ENCODE measurements at regions of chr17 and their contacts with region 1.

Region 1: GRCh38 chr17:57955183-57955931 is at the start of gene CUEDC1:
- DNase-seq: peak in 1 of 2 experiments; percentile 82
- H3K4me3 ChIP-seq: peak within 1 kb of the TSS; percentile 32 to 86 (median 66)
- H3K27ac ChIP-seq: no peak within 1 kb of the TSS
- H3K4me1 ChIP-seq: peaks cover 12 to 23% (median 14%) of the 10 kb centered on the region in 4 experiments
- H3K27me3 ChIP-seq: peaks cover 0 to 30% (median 20%) of the 10 kb centered on the region in 4 experiments; a peak in 6 of 7 replicates
- CTCF ChIP-seq: peak; percentile 16 to 63 (median 37)
- EP300 ChIP-seq: no peak
- POLR2A ChIP-seq: no peak
- RAD21 ChIP-seq: peak in 1 of 2 experiments; percentile 23; a peak in 2 of 4 replicates
- total RNA-seq, gene CUEDC1: 7.8 and 10.7 TPM in 2 replicates

Region 2: DNA sequence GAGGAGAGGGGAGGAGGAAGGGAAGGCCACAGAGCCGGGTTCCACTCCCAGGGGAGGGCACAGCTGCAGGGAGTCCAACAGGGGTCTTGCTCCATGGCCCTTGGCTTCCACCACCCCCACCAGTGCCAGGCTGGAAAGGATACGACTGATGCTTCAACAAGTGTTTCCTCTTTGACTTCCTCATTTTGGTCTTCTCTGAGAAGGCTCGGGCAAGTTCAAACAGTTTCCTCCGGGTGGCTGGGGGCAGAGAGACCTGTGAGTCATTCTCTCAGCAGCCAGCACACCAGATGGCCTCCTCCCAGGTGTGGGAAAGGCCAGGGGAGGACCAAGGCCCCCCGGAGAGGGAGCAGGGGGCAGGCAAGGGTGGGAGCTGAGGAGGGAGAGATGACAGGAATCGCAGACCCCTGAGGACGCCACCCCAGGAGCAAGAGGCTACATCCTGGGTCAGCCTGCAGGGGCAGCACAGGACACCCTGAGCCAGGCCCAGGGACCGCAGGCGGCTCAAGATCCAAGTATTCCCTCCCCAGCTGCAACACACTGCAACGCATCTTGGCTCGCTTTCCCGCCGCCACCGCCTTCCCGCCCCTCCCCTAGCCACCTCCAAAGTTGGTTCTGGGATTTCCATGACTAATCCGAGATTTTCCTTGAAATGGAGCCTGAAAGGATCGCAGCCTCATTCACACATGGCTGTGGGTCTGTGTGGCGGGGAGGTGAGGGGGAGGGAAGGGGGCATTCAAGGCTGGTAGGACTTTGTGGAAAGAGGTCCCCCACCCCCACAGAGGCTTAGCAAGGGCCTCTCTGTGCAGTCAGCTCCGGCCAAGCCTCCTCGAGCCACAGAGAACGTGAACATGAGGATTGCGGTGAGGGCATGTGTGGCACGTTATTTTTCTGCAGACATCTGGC is 87.1 kb before region 1 on chr17:
- CTCF ChIA-PET with region 1: interaction called, 162 read pairs
- POLR2A ChIA-PET with region 1: interaction called, 15 read pairs
- DNase-seq: peak; percentile 58 to 71
- H3K4me3 ChIP-seq: no peak overlapping the region
- H3K27ac ChIP-seq: no peak overlapping the region
- H3K4me1 ChIP-seq: peaks cover 0 to 17% (median 10%) of the 10 kb centered on the region in 4 experiments; a peak in 6 of 7 replicates
- H3K27me3 ChIP-seq: no peaks in the 10 kb centered on the region; a peak in 2 of 7 replicates
- CTCF ChIP-seq: peak; percentile 65 to 79 (median 73)
- EP300 ChIP-seq: no peak
- POLR2A ChIP-seq: no peak
- RAD21 ChIP-seq: peak; percentile 65 to 68

Region 3: GRCh38 chr17:57892146-57892828 is 63.1 kb before region 1 on chr17:
- CTCF ChIA-PET with region 1: interaction called, 14 read pairs
- POLR2A ChIA-PET with region 1: interaction called, 4 read pairs
- DNase-seq: peak in 1 of 2 experiments; percentile 99
- H3K4me3 ChIP-seq: peak overlapping the region in 1 of 4 experiments; percentile 1; a peak in 1 of 8 replicates
- H3K27ac ChIP-seq: peak overlapping the region; percentile 54; the same call in 1 of the 2 replicates
- H3K4me1 ChIP-seq: peaks cover 8 to 11% (median 11%) of the 10 kb centered on the region in 4 experiments
- H3K27me3 ChIP-seq: no peaks in the 10 kb centered on the region
- CTCF ChIP-seq: peak; percentile 96 to 100 (median 100)
- EP300 ChIP-seq: peak in 1 of 2 experiments; percentile 71; a peak in 1 of 3 replicates
- POLR2A ChIP-seq: no peak
- RAD21 ChIP-seq: peak; percentile 89 to 94

Region 4: GRCh38 chr17:57916925-57917858 is 38.2 kb before region 1 on chr17:
- CTCF ChIA-PET with region 1: interaction called, 12 read pairs
- POLR2A ChIA-PET with region 1: no interaction called
- DNase-seq: no peak
- H3K4me3 ChIP-seq: no peak overlapping the region
- H3K27ac ChIP-seq: peak overlapping the region; percentile 68; the same call in 1 of the 2 replicates
- H3K4me1 ChIP-seq: peaks cover 5 to 21% (median 14%) of the 10 kb centered on the region in 4 experiments; a peak in 5 of 7 replicates
- H3K27me3 ChIP-seq: no peaks in the 10 kb centered on the region
- CTCF ChIP-seq: peak in 1 of 3 experiments; percentile 2; a peak in 1 of 4 replicates
- EP300 ChIP-seq: no peak
- POLR2A ChIP-seq: no peak
- RAD21 ChIP-seq: peak in 1 of 2 experiments; percentile 20; a peak in 1 of 4 replicates

Region 5: DNA sequence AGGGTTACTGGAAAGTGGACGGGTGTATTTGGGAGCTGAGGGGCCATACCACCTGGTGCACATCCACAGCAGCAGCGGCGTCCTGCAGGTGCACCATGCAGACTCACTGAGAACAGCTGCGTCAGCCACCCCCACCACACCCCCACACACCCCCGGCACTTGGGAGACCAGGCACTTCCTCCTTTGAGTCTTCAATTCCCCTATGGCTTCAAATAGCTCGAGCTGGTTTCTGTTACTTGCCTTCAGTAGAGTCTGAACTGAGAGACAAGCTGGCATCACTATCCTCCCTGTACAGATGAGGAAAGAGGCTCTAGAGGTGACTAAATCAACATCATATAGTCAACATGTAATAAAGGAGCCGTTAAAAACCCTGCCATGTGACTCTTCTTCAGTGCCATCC is 15.6 kb before region 1 on chr17:
- CTCF ChIA-PET with region 1: interaction called, 65 read pairs
- POLR2A ChIA-PET with region 1: interaction called, 7 read pairs
- DNase-seq: no peak
- H3K4me3 ChIP-seq: no peak overlapping the region
- H3K27ac ChIP-seq: no peak overlapping the region
- H3K4me1 ChIP-seq: peaks cover 6 to 15% (median 13%) of the 10 kb centered on the region in 4 experiments
- H3K27me3 ChIP-seq: no peaks in the 10 kb centered on the region
- CTCF ChIP-seq: no peak
- EP300 ChIP-seq: no peak
- POLR2A ChIP-seq: no peak
- RAD21 ChIP-seq: no peak

Region 6: DNA sequence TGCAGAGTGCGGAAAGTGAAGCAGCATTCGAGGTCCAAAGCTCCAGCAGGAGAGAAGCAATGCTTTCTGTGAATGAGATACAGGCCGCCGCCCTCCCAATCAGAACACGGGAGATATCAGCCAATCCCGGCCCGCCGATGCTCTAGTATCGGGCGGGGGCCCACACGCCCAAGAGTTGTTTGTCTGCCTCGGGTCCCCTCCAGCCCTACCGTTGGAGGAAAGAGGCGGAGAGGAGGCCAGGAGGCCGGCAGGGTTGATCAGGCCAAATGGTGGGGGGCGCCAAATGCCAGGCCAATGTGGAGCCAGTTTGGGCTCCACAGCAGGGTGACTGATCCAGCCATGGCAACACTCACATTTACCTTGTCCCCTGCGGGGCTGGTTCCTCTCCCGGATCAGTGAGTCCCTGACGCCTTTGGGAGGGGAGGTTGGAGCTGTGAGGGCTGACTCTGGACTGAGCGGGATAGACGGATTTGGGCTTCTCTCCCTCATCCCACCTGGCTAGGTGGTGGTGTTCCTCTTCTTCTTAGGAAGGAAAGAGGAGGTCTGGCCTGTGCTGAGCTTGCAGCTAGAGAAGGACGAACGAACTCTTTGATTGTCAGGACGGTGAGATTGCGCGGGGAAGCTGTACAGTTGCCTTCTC is 10.3 kb after region 1 on chr17:
- CTCF ChIA-PET with region 1: interaction called, 56 read pairs
- POLR2A ChIA-PET with region 1: interaction called, 12 read pairs
- DNase-seq: peak in 1 of 2 experiments; percentile 52
- H3K4me3 ChIP-seq: no peak overlapping the region
- H3K27ac ChIP-seq: no peak overlapping the region
- H3K4me1 ChIP-seq: peaks cover 0 to 6% (median 0%) of the 10 kb centered on the region in 4 experiments; a peak in 3 of 7 replicates
- H3K27me3 ChIP-seq: no peaks in the 10 kb centered on the region
- CTCF ChIP-seq: no peak
- EP300 ChIP-seq: no peak
- POLR2A ChIP-seq: no peak
- RAD21 ChIP-seq: 0 out of 4 replicates have a peak, but pooled peaks of 1 of the 2 experiments have one; percentile 2

Region 7: GRCh38 chr17:57970706-57971105 is 15.3 kb after region 1 on chr17:
- CTCF ChIA-PET with region 1: interaction called, 56 read pairs
- POLR2A ChIA-PET with region 1: interaction called, 12 read pairs
- DNase-seq: no peak
- H3K4me3 ChIP-seq: no peak overlapping the region
- H3K27ac ChIP-seq: no peak overlapping the region
- H3K4me1 ChIP-seq: peaks cover 0 to 3% (median 0%) of the 10 kb centered on the region in 4 experiments; a peak in 3 of 7 replicates
- H3K27me3 ChIP-seq: no peaks in the 10 kb centered on the region
- CTCF ChIP-seq: no peak
- EP300 ChIP-seq: no peak
- POLR2A ChIP-seq: no peak
- RAD21 ChIP-seq: no peak

Measured in H1 (cell line).